Natural killer cell (primary cell): ENCODE measurements at regions of chr2 and their contacts with region 1.

Region 1: GRCh38 chr2:44087036-44087713 is 81.5 kb upstream of the PPM1B start:
- DNase-seq: peak; percentile 85 to 90
- ATAC-seq: peak; percentile 95 to 98 (median 95)
- H3K4me3 ChIP-seq: peak overlapping the region; percentile 21
- H3K4me3 Mint-ChIP-seq: peak overlapping the region; percentile 88
- H3K27ac ChIP-seq: peak overlapping the region; percentile 12
- H3K27ac Mint-ChIP-seq: peak overlapping the region; percentile 91
- H3K4me1 ChIP-seq: peaks cover 29% of the 10 kb centered on the region
- H3K4me1 Mint-ChIP-seq: peaks cover 20 to 25% of the 10 kb centered on the region in 2 donors
- H3K27me3 ChIP-seq: no peaks in the 10 kb centered on the region
- H3K27me3 Mint-ChIP-seq: no peaks in the 10 kb centered on the region
- CTCF ChIP-seq: peak; percentile 93

Region 2: DNA sequence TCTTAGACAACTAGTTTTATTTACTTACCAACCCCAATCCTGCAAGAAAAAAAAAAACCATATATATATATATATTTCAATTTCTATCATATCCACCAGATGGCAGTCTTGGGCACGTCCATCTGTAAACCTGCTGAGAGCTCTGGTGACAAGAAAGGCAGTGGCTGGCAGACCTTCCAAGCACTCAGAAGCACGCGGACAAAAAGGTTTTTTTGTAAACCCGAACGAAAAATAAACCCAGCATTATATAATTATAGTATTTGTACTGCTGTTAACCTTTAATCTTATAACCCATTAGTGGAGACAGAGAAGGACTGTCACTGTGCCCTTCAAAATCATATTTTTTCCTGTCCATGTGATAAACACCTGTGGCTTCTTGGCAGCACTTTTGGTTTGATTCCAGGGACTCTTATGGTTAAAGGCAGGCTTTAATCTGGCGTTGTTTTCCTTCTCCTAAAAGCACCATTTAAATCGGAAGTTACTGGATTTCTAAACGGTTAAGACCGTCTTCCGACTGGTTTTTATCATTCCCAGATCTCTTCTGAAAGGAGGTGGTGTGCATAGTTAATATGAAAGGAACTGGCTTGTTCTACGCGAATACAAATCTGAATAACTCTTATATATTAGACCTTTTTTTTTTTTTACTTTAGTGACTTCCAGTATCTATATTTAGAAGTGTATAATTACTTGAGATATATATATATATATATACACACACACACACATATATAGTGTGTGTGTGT is 157.1 kb after region 1 on chr2:
- intact Hi-C with region 1: loop called (anchors 5 kb)
- DNase-seq: peak; percentile 22 to 88
- ATAC-seq: peak; percentile 90 to 97 (median 97)
- H3K4me3 ChIP-seq: peak overlapping the region; percentile 15
- H3K4me3 Mint-ChIP-seq: peak overlapping the region; percentile 74
- H3K27ac ChIP-seq: no peak overlapping the region
- H3K27ac Mint-ChIP-seq: peak overlapping the region; percentile 11 to 58
- H3K4me1 ChIP-seq: peaks cover 2% of the 10 kb centered on the region
- H3K4me1 Mint-ChIP-seq: peaks cover 16 to 20% of the 10 kb centered on the region in 2 donors
- H3K27me3 ChIP-seq: no peaks in the 10 kb centered on the region
- H3K27me3 Mint-ChIP-seq: no peaks in the 10 kb centered on the region
- CTCF ChIP-seq: peak; percentile 70

Region 3: GRCh38 chr2:44342854-44343253 is 255.7 kb after region 1 on chr2:
- intact Hi-C with region 1: loop called (anchors 1 kb)
- DNase-seq: peak in 1 of 2 donors; percentile 65
- ATAC-seq: peak in 2 of 3 donors; percentile 50 to 52
- H3K4me3 ChIP-seq: no peak overlapping the region
- H3K4me3 Mint-ChIP-seq: no peak overlapping the region
- H3K27ac ChIP-seq: no peak overlapping the region
- H3K27ac Mint-ChIP-seq: peak overlapping the region in 1 of 2 donors; percentile 54
- H3K4me1 ChIP-seq: no peaks in the 10 kb centered on the region
- H3K4me1 Mint-ChIP-seq: no peaks in the 10 kb centered on the region
- H3K27me3 ChIP-seq: no peaks in the 10 kb centered on the region
- H3K27me3 Mint-ChIP-seq: no peaks in the 10 kb centered on the region
- CTCF ChIP-seq: peak; percentile 23

Region 4: DNA sequence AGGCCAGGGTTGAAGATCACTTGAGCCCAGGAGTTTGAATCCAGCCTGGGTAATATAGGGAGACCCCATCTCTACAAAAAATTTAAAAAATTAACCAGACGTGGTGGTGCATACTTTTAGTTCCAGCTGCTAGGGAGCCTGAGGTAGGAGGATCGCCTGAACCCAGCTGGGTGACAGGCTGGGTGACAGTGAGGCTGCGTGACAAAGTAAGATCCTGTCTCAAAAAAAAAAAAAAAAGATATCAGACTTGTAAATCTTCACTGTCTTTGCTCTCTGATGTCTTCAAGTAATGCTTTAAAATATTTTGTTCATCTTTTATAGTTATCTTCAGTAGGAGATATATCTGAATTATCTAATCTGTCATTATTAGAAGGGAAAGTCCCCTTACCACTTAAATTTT is 285.1 kb after region 1 on chr2:
- intact Hi-C with region 1: no loop called
- DNase-seq: no peak
- ATAC-seq: no peak
- H3K4me3 ChIP-seq: no peak overlapping the region
- H3K4me3 Mint-ChIP-seq: no peak overlapping the region
- H3K27ac ChIP-seq: no peak overlapping the region
- H3K27ac Mint-ChIP-seq: no peak overlapping the region
- H3K4me1 ChIP-seq: no peaks in the 10 kb centered on the region
- H3K4me1 Mint-ChIP-seq: no peaks in the 10 kb centered on the region
- H3K27me3 ChIP-seq: no peaks in the 10 kb centered on the region
- H3K27me3 Mint-ChIP-seq: no peaks in the 10 kb centered on the region
- CTCF ChIP-seq: no peak

Region 5: DNA sequence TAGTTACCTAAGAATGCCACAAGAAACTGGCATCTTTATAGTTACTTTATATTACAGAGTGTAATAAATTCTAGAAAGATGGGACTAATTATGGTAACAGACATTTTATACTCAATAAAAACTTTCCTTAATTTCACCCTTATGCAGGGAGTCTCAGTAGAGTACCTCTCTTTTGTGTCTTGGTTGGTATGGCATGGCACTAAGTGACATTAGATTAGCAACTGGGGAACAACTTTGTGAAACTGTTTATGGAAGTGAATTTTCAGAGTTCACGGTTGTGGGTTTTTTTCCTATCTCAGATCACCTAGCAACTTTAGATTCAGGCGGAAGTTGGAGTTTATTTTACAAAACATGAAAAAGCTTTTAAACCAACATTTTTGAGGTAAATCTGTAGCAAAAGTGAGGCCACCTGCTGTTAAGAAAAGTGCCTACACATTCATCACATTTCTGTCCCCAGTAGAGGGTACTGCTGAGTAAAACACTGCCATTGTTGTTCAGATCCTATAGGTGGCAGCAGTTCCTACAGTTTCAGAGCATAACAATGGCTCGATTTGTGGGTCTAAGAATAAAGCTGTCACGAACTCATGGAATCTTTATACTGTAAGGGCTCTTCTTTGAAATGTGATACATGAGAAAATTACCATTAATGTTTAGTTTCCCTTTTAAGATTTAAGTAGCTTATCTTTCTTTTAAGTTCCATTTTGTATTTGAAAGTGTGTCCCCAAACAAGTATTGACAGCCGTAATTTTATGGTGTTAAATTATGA is 392.1 kb after region 1 on chr2:
- intact Hi-C with region 1: loop called (anchors 1 kb)
- DNase-seq: peak in 1 of 2 donors; percentile 83
- ATAC-seq: peak; percentile 99 to 100 (median 100)
- H3K4me3 ChIP-seq: no peak overlapping the region
- H3K4me3 Mint-ChIP-seq: no peak overlapping the region
- H3K27ac ChIP-seq: no peak overlapping the region
- H3K27ac Mint-ChIP-seq: no peak overlapping the region
- H3K4me1 ChIP-seq: no peaks in the 10 kb centered on the region
- H3K4me1 Mint-ChIP-seq: peaks cover 0 to 4% of the 10 kb centered on the region in 2 donors
- H3K27me3 ChIP-seq: no peaks in the 10 kb centered on the region
- H3K27me3 Mint-ChIP-seq: no peaks in the 10 kb centered on the region
- CTCF ChIP-seq: peak; percentile 100